AG04449 (cell line): ENCODE measurements at regions of chr5 and their contacts with region 1.

Region 1: DNA sequence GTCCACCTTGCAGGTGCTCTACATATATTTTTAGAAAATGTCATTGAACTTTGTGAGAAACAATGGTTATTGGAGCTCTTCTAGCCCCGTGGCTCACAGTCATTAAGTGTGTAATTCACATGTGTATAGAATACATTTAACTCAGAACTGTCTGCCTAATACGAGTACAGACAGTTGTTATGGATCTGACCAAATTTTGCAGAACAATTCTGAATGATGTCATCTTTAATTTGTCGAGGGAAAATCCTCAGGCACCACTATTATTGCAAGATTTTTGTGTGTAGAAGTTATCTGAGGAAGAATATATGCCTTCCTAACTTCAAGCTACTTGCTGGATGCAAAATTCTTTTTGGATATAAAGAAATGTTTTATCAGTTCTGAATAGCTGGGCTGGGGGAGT is 216.9 kb downstream of the CD180 start:
- DNase-seq: no peak
- H3K4me3 ChIP-seq: no peak overlapping the region
- CTCF ChIP-seq: no peak

Region 2: DNA sequence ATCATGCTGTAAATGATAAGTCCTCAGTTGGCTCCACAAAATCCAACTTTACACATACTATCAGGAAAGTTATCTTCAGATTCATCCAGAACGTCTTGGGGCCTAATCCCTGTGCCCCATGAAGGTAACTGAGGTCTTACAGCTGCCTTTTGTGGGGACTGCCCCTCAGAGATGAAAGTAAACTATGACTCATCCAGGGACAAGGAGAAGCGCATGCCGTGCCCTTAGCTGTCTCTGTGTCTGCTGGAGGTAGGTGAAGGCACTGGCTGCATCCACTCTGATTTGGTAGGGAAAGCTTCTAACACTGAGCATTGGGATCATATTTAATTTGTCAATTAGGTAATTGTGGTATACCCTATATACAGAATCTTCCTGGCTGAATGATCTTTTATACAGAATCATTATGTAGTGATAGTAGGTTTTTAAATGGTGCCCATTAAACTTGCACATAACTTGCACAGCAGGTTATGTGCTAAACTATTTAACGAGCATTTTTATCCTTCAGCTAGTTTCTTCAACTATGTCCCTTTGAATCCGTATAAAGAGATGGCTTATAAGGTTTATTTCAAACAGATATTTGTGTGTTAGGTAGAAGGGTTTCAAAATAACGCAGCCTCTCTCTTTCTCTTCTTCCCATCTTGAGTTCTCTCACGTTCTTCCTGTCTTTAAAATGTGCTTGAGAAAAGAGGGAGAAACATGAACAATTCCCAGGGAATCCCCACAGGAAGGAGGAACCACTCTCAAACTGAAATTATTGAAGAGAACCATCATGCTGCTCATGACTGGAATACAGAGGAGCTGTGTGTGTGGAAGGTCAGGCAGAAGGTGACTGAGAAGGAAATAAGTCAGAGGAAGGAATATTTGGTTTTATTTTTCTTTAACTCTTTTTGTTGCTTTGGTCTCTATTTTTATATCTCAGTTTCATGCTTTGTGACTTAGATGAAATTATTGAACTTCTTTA is 34.1 kb before region 1 on chr5:
- CTCF ChIA-PET with region 1: no interaction called
- POLR2A ChIA-PET with region 1: no interaction called
- DNase-seq: no peak
- H3K4me3 ChIP-seq: no peak overlapping the region
- CTCF ChIP-seq: no peak

Region 3: DNA sequence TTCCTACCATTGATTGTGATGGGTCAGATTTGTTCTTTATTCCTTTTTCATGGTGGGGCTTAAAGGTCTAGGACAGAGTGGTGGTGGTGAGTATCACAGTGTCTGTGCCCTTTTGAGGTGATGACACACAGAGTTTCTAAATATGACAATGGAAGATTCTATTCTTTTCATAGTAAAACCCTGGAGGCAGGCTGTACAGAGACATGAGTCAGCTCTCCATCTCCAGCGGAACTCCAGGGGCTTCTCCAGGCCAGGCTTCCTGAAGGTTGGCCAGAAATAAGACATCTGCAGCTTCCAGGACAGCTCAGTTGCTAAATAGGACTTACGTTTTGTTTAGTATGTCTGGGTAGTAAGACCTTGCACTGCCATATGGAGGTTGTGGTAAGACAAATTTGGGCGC is 12.6 kb before region 1 on chr5:
- CTCF ChIA-PET with region 1: interaction called, 16 read pairs
- POLR2A ChIA-PET with region 1: no interaction called
- DNase-seq: peak; percentile 66
- H3K4me3 ChIP-seq: no peak overlapping the region
- CTCF ChIP-seq: no peak